Mammary epithelial cell (primary cell): ENCODE measurements at regions of chr10 and their contacts with region 1.

Region 1: GRCh38 chr10:128263891-128264688 is 137.9 kb upstream of the MKI67 start:
- DNase-seq: peak; percentile 16
- H3K4me3 ChIP-seq: no peak overlapping the region
- H3K27ac ChIP-seq: no peak overlapping the region
- H3K4me1 ChIP-seq: no peaks in the 10 kb centered on the region
- H3K27me3 ChIP-seq: no peaks in the 10 kb centered on the region
- CTCF ChIP-seq: peak; percentile 65 to 67

Region 2: DNA sequence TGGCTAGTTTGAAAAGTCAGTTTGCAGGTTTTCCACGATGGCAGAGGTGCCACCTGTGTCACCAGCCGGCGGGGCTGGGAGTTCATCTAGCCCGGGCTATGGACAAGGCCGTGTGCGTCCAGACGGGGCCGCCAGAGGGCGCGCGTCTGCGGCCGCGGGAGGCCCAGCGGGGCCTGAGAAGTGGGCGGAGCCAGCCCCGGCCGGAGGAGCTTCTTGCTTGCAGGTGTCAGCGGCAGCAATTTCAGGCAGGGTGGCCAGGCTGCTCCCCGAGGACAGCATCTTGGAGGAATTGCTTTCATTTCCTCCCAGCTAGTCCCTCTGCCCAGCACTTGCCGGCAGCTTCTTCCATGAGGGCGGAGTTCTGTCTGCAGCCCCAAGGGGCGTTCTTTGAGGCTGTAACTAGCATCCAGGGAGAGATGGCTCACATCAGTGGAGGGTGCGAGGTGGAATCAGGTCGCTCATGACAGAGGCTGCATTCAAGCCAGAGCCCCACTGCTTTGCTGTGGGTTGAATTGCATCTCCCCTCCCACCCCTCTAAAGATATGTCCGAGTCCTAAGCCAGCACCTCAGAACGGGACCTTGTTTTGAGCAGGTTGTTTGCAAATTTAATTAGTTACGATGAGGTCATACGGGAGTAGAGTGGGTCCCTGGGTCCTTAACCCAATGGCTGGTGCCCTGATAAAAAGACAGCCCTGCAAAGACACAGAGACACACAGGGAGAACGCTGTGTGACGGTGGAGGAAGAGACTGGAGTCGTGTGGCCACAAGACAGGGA is 52.0 kb before region 1 on chr10:
- CTCF ChIA-PET with region 1: no interaction called
- dilution Hi-C with region 1: no loop called
- in situ Hi-C with region 1: no loop called
- intact Hi-C with region 1: no loop called
- DNase-seq: peak; percentile 60
- H3K4me3 ChIP-seq: no peak overlapping the region
- H3K27ac ChIP-seq: no peak overlapping the region
- H3K4me1 ChIP-seq: no peaks in the 10 kb centered on the region
- H3K27me3 ChIP-seq: no peaks in the 10 kb centered on the region
- CTCF ChIP-seq: peak; percentile 70 to 95

Region 3: GRCh38 chr10:128526791-128527375 is 262.8 kb after region 1 on chr10:
- CTCF ChIA-PET with region 1: no interaction called
- dilution Hi-C with region 1: no loop called
- in situ Hi-C with region 1: no loop called
- intact Hi-C with region 1: loop called (anchors 10 kb)
- DNase-seq: no peak
- H3K4me3 ChIP-seq: no peak overlapping the region
- H3K27ac ChIP-seq: no peak overlapping the region
- H3K4me1 ChIP-seq: no peaks in the 10 kb centered on the region
- H3K27me3 ChIP-seq: no peaks in the 10 kb centered on the region
- CTCF ChIP-seq: no peak

Region 4: GRCh38 chr10:128660726-128661125 is 396.6 kb after region 1 on chr10:
- CTCF ChIA-PET with region 1: no interaction called
- dilution Hi-C with region 1: no loop called
- in situ Hi-C with region 1: loop called in 1 of 2 experiments (anchors 25 kb)
- intact Hi-C with region 1: loop called (anchors 2 kb)
- DNase-seq: peak; percentile 39
- H3K4me3 ChIP-seq: no peak overlapping the region
- H3K27ac ChIP-seq: no peak overlapping the region
- H3K4me1 ChIP-seq: no peaks in the 10 kb centered on the region
- H3K27me3 ChIP-seq: peaks cover 2% of the 10 kb centered on the region
- CTCF ChIP-seq: peak; percentile 47 to 69

Region 5: GRCh38 chr10:128859738-128860386 is 595.8 kb after region 1 on chr10:
- CTCF ChIA-PET with region 1: no interaction called
- dilution Hi-C with region 1: no loop called
- in situ Hi-C with region 1: no loop called
- intact Hi-C with region 1: loop called (anchors 2 kb)
- DNase-seq: no peak
- H3K4me3 ChIP-seq: no peak overlapping the region
- H3K27ac ChIP-seq: no peak overlapping the region
- H3K4me1 ChIP-seq: no peaks in the 10 kb centered on the region
- H3K27me3 ChIP-seq: no peaks in the 10 kb centered on the region
- CTCF ChIP-seq: peak; percentile 28 to 31

Region 6: DNA sequence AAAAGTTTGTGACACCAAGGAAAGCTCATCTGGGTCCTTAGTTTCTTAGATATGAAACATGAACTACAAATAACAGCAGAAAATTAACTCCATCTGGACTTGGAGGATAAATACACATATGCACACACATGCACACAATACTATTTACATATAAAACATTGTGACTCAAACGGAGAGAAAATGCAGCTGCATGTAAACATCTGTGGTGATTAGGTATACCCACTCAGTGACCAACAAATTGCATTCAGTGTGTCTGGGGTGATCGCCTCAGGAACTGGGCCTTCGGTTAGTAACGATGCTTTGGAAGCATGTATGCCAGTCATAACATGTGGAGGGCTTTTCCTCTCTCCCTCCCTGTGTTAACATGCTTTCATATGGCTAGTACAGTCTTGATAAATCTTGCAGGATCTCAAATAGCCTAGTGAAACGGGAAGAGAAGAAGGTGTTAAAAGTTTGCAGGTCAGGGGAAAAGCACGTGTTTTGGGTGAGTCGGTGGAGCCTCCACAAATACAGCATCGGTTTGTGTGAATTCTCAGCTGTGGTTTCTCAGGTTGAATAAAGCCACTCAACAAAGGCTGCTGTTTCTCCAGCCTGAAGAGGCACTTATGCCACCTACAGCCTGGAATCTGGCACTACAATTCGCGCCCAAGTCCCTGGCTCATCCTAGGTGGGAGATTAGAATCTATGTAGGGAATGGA is 1863.4 kb after region 1 on chr10:
- CTCF ChIA-PET with region 1: no interaction called
- dilution Hi-C with region 1: no loop called
- in situ Hi-C with region 1: no loop called
- intact Hi-C with region 1: loop called (anchors 10 kb)
- DNase-seq: peak; percentile 66
- H3K4me3 ChIP-seq: no peak overlapping the region
- H3K27ac ChIP-seq: no peak overlapping the region
- H3K4me1 ChIP-seq: no peaks in the 10 kb centered on the region
- H3K27me3 ChIP-seq: peaks cover 3% of the 10 kb centered on the region
- CTCF ChIP-seq: peak; percentile 93 to 94